Activated T-helper 2 cell treated with anti-CD3 and anti-CD28 coated beads, Interferon-gamma antibody, Interleukin-2, Interleukin-4, amounts not matched to agents 10 μg/mL and 5 μg/mL and 100 μg/mL, durations not matched to agents 14 hours and 24 hours and 36 hours (primary cell): ENCODE measurements at regions of chr20 and their contacts with region 1.

Region 1: DNA sequence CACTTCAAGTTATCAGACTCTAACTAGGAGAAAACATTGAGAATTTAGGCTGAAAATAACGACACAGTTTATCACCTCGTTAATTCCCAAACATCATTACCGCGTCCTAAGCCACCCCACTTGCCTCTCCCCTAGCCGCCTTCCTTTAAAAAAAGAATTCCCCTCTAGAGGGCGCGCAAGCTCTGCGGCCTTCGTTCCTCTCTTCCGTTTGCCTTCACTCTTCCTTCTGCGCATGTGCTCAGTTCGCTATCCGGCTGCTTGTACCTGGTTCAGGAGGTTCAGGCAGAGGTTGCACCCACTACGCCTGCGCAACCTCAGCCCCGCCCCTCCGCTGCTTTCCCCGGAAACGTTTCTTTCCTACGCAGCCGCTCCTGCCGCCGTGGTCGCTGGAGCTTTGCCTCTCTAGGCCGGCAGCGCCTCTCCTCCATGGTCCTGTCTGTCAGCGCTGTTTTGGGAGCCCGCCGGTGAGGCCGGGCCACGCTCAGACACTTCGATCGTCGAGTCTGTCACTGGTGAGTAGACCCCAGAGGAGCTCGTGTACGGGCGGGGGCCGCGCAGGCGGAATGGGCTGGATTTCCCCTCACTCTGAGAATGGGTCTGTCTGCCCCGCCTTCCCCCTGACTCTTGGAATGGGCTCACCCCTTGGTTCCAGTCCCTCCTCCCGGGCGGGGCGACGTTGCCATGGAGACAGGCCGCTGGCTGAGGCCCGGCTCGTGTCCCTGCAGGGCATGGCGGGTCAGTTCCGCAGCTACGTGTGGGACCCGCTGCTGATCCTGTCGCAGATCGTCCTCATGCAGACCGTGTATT is at the start of gene SYS1:
- DNase-seq: peak; percentile 98
- H3K4me3 Mint-ChIP-seq: peak within 1 kb of the TSS; percentile 93
- H3K27ac Mint-ChIP-seq: peak within 1 kb of the TSS; percentile 94
- H3K4me1 Mint-ChIP-seq: peaks cover 28% of the 10 kb centered on the region
- H3K27me3 Mint-ChIP-seq: no peaks in the 10 kb centered on the region
- total RNA-seq, gene SYS1: 16.8 and 20.1 TPM in 2 replicates

Region 2: GRCh38 chr20:45157962-45158361 is 205.0 kb before region 1 on chr20:
- intact Hi-C with region 1: no loop called
- DNase-seq: no peak
- H3K4me3 Mint-ChIP-seq: no peak overlapping the region
- H3K27ac Mint-ChIP-seq: no peak overlapping the region
- H3K4me1 Mint-ChIP-seq: no peaks in the 10 kb centered on the region
- H3K27me3 Mint-ChIP-seq: peaks cover 23% of the 10 kb centered on the region

Region 3: DNA sequence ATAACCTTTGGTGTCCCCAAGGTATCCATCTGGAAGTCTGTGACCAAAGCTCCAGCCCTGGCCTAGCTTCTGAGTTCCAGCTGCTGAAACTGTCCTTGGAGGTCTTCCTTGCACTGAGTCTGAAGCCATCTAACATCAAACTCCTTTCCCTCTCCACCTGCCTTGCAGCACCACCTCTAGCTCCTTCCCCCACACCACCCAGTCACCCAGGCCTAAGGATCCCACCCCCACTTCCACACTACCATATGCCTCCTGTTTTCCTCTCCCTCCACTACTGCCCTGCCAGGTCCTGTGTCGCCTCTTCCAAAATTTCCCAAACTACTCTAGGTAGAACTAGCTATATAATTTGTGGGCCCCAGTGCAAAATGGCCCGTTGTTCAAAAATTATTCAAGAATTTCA is 44.1 kb before region 1 on chr20:
- intact Hi-C with region 1: loop called (anchors 5 kb)
- DNase-seq: no peak
- H3K4me3 Mint-ChIP-seq: no peak overlapping the region
- H3K27ac Mint-ChIP-seq: peak overlapping the region; percentile 64
- H3K4me1 Mint-ChIP-seq: peaks cover 32% of the 10 kb centered on the region
- H3K27me3 Mint-ChIP-seq: peaks cover 22% of the 10 kb centered on the region

Region 4: GRCh38 chr20:45347936-45348778 is 14.8 kb before region 1 on chr20 and contains the start of gene SDC4:
- intact Hi-C with region 1: loop called (anchors 1 kb)
- DNase-seq: peak; percentile 61
- H3K4me3 Mint-ChIP-seq: peak within 1 kb of the TSS; percentile 87
- H3K27ac Mint-ChIP-seq: peak within 1 kb of the TSS; percentile 68
- H3K4me1 Mint-ChIP-seq: peaks cover 55% of the 10 kb centered on the region
- H3K27me3 Mint-ChIP-seq: no peaks in the 10 kb centered on the region
- total RNA-seq, gene SDC4: 133 and 136 TPM in 2 replicates

Region 5: GRCh38 chr20:45415774-45416637 is 53.0 kb after region 1 on chr20 and contains the start of gene PIGT:
- intact Hi-C with region 1: loop called (anchors 2 kb)
- DNase-seq: peak; percentile 86
- H3K4me3 Mint-ChIP-seq: peak within 1 kb of the TSS; percentile 92
- H3K27ac Mint-ChIP-seq: peak within 1 kb of the TSS; percentile 91
- H3K4me1 Mint-ChIP-seq: peaks cover 31% of the 10 kb centered on the region
- H3K27me3 Mint-ChIP-seq: no peaks in the 10 kb centered on the region
- total RNA-seq, gene PIGT: 72.5 and 72.7 TPM in 2 replicates

Region 6: GRCh38 chr20:45436732-45437391 is 73.9 kb after region 1 on chr20:
- intact Hi-C with region 1: loop called (anchors 1 kb)
- DNase-seq: peak; percentile 74
- H3K4me3 Mint-ChIP-seq: peak overlapping the region; percentile 70
- H3K27ac Mint-ChIP-seq: no peak overlapping the region
- H3K4me1 Mint-ChIP-seq: peaks cover 11% of the 10 kb centered on the region
- H3K27me3 Mint-ChIP-seq: no peaks in the 10 kb centered on the region

Region 7: DNA sequence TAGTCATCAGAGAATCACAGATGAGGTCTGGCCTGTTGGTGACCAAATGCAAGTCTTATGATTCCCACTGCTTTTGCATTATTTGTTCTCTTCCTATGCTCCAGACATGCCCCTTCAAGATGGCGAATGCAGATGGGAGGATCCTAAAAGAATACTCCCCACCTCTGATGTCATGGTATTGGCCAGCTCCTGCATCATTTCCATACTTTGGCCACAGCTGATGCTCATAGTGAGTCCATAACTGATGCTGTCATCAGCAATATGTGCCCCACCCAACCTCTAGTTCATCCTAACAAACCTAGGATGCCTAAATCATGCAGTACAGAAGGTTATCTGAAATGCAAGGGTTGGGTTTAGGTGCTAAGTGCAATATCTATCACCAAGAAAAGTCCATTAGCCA is 273.5 kb after region 1 on chr20:
- intact Hi-C with region 1: no loop called
- DNase-seq: no peak
- H3K4me3 Mint-ChIP-seq: no peak overlapping the region
- H3K27ac Mint-ChIP-seq: no peak overlapping the region
- H3K4me1 Mint-ChIP-seq: no peaks in the 10 kb centered on the region
- H3K27me3 Mint-ChIP-seq: peaks cover 8% of the 10 kb centered on the region